Caco-2 (cell line): ENCODE measurements at regions of chr20 and their contacts with region 1.

Region 1: DNA sequence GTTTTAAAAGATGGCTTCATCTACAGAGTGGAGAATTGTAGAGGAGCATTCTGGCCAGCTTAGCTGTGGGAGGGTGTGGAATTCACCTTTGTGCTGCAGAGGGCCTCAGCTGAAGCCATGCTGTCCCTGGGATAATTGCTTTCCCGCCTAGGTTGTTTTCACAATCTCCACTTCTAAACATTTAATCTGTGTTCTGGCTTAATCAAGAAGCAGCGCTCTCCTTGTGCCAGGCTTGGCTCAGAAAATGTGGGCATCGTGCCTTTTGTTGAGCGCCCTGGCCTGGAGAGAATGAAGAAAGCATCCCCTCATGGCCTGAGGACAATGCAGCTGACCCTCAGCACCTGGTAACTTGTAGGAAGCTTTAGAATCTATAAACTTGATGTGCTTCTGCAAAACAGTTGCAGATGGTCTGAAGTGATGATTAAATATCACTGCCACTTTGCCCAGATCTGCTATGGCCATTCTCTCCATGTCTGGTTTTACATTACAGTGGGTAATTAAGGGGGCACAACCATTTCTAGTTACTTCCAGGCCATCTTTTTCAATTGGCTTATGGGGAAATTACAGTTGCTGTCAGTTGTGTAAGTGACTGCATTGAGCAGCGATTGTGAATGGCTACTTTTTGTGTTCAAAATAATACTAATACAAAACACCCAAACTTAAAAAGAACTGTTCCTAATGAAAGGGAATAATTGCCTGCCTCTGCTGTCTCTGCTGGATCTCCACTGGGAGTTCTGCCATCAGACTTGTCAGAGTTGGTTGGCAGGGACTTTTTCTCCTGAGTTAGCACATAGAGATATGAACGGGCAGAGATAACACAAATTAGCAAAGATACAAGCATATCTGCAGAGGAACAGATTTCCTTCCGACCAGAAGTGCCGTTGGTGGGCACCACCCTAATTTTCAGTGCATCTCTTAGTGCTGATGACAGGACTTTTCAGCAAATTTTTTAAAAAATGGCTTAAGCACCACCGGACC is 18.4 kb downstream of the CTNNBL1 start:
- DNase-seq: no peak
- H3K4me3 ChIP-seq: no peak overlapping the region
- H3K4me3 Mint-ChIP-seq: no peak overlapping the region
- H3K27ac Mint-ChIP-seq: peak overlapping the region; percentile 69
- H3K4me1 ChIP-seq: peaks cover 43% of the 10 kb centered on the region
- H3K4me1 Mint-ChIP-seq: peaks cover 37% of the 10 kb centered on the region
- H3K27me3 ChIP-seq: no peaks in the 10 kb centered on the region
- H3K27me3 Mint-ChIP-seq: no peaks in the 10 kb centered on the region
- CTCF ChIP-seq: no peak

Region 2: DNA sequence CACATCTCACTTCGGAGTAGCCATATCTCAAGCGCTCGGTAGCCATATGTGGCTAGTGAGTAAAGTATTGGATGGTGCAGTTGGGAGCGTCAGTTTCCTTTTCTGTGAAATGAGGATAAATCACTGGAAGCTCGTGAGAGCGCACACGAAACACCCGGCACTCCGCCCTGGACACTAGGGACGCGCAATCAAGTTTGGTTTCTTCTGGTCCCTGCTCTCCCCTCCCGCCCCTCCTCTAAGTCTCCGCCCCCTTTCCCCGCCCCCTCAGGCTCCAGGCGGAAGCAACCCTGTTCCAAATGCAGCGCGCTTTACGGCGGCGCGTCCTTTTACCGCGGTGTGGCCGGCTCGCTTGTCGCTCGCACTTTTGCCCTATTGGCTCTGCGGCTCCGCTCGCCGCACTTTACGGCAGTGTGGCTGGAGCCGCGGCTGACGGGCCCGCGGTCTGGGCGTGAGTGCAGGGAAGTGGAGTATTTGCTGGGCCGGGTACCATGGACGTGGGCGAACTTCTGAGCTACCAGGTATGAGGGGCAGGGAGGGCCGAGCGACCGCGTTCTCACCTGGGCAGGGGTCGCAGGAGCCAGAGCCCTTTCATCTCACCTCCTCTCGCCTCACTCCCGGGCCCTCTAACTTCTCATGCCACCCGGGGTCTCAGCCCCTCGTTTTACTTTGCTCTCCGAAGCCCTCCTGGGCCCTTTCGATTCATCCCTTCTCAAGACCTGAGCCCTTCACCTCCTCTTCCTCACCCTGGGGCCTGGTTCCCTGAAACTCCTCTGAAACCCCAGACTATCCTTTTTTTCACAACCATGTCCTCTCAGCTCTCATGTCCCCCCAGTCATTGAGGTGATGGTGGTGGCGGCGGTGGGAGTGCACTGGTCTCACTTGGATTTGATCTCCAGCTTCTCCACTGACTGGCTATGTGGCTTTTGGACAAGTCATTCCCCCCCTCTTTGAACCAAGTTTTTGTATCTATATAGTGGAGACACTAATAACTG is 18.3 kb before region 1 on chr20 and contains the start of gene CTNNBL1:
- CTCF ChIA-PET with region 1: no interaction called
- POLR2A ChIA-PET with region 1: interaction called, 4 read pairs
- intact Hi-C with region 1: loop called (anchors 1 kb)
- DNase-seq: peak; percentile 100
- H3K4me3 ChIP-seq: peak within 1 kb of the TSS; percentile 53
- H3K4me3 Mint-ChIP-seq: peak within 1 kb of the TSS; percentile 92
- H3K27ac Mint-ChIP-seq: peak within 1 kb of the TSS; percentile 86
- H3K4me1 ChIP-seq: peaks cover 11% of the 10 kb centered on the region
- H3K4me1 Mint-ChIP-seq: peaks cover 5% of the 10 kb centered on the region
- H3K27me3 ChIP-seq: no peaks in the 10 kb centered on the region
- H3K27me3 Mint-ChIP-seq: peaks cover 3% of the 10 kb centered on the region
- CTCF ChIP-seq: no peak
- total RNA-seq, gene CTNNBL1: 203 and 204 TPM in 2 replicates

Region 3: DNA sequence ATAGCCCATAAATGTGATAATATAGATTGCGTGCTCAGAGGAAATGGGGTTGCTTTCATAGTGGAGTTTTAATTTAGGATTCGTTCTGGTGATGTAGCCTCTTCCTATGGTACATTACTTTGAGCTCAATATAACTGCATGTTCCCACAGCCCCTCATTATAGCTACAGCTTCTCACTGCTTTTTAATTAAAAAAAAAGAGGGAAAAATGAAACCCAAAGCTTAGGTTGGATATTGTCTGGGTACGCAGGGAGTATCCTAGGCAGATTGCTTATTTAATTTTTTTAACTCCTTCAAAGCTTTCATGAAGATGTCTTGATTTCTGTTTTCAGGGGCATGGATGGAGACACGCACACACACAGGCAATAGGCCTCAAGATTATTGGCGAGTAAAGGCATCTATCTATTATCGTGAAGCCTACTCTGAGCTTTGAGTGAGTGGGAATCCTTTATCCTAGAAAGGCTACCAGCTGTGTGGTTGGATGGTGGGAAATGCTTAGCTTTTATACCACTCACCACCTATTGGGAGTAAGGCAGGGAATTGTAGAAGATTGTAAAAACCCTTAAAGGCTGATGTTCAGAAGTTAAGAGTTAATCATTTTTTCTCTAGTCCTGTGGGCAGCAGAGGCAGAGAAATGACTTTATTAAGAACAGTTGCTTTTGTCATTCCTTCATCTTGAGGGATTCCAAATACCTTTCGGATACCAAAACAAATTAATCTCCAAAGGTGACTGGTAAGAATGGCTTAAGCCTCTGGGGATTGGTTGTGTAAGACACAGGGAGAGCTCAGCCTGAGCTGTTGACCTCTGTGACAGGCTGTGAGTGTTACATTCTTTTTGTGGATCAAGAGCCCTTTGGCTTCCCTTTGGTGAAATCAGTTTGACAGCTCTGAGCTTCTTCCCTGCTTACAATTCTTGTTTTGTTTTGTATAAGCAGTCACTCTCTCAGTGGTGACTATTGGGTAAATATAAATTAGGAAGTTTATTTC is 15.0 kb after region 1 on chr20:
- CTCF ChIA-PET with region 1: no interaction called
- POLR2A ChIA-PET with region 1: interaction called, 3 read pairs
- intact Hi-C with region 1: loop called (anchors 1 kb)
- DNase-seq: peak; percentile 58 to 66
- H3K4me3 ChIP-seq: no peak overlapping the region
- H3K4me3 Mint-ChIP-seq: no peak overlapping the region
- H3K27ac Mint-ChIP-seq: no peak overlapping the region
- H3K4me1 ChIP-seq: peaks cover 31% of the 10 kb centered on the region
- H3K4me1 Mint-ChIP-seq: peaks cover 12% of the 10 kb centered on the region
- H3K27me3 ChIP-seq: no peaks in the 10 kb centered on the region
- H3K27me3 Mint-ChIP-seq: no peaks in the 10 kb centered on the region
- CTCF ChIP-seq: no peak

Region 4: GRCh38 chr20:37758332-37758731 is 46.1 kb after region 1 on chr20:
- CTCF ChIA-PET with region 1: interaction called, 4 read pairs
- POLR2A ChIA-PET with region 1: no interaction called
- intact Hi-C with region 1: loop called (anchors 1 kb)
- DNase-seq: peak; percentile 66 to 72
- H3K4me3 ChIP-seq: no peak overlapping the region
- H3K4me3 Mint-ChIP-seq: no peak overlapping the region
- H3K27ac Mint-ChIP-seq: no peak overlapping the region
- H3K4me1 ChIP-seq: no peaks in the 10 kb centered on the region
- H3K4me1 Mint-ChIP-seq: peaks cover 6% of the 10 kb centered on the region
- H3K27me3 ChIP-seq: no peaks in the 10 kb centered on the region
- H3K27me3 Mint-ChIP-seq: no peaks in the 10 kb centered on the region
- CTCF ChIP-seq: peak; percentile 75 to 78